ENCODE measurements at regions of chr9 and their contacts with region 1.

Region 1: DNA sequence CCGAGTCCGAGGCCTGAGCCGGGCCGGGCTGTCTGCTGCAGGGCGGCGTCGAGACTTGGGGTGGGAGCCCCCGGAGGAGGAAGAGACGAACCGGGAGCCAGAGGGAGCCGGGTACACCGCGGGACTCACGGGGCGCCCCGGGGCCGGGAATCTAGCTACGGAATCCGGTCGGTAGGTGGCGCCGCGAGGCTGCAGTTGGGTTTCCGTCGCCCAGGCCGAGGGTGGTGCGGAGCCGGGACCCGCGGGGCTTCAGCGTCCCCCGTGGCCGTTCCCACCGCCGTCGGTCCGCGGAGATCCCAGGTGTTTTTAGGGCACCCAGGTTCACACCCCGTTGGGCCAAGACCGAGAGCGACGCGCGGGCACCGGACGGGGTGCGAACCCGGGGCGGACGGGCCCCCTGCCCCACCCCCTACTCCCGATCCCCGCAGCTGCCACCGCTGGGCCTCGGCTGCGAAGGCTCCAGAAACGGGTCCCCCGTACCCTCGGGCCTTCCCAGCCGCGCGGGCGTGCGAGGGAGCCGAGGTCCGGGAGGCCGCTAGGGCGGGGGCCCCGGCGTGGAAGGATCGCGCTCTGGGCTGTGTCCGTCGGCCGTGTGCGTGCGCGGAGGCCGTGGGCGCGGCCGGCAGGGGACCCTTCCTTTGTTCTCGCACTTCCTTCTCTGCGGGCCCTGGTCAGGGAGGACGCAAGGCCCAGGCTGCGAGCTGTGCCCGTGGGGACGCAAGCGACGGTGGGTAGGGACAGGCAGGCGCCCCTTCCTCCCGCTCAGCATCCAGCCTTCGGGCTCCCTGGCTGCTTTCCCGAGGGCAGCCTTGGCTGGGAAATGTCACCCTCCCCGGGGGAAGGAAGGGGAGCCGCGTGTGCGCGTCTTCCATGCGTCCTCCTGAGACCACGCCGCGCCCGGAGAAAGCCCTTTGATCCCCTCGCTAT is 146.6 kb downstream of the GAPVD1 start:
- DNase-seq: no peak
- ATAC-seq: peak; percentile 65
- H3K4me3 ChIP-seq: peak overlapping the region; percentile 79 to 81
- H3K27ac ChIP-seq: peak overlapping the region; percentile 82
- H3K4me1 ChIP-seq: peaks cover 17 to 54% of the 10 kb centered on the region in 2 experiments
- H3K27me3 ChIP-seq: no peaks in the 10 kb centered on the region
- CTCF ChIP-seq: peak in 2 of 3 experiments; percentile 80 to 82; a peak in 4 of 6 replicates
- POLR2A ChIP-seq: peak; percentile 21
- RAD21 ChIP-seq: no peak

Region 2: GRCh38 chr9:125421591-125422181 is 13.4 kb after region 1 on chr9:
- CTCF ChIA-PET with region 1: interaction called, 3 read pairs
- POLR2A ChIA-PET with region 1: interaction called, 12 read pairs
- RAD21 ChIA-PET with region 1: no interaction called
- intact Hi-C with region 1: no loop called
- DNase-seq: no peak
- ATAC-seq: peak; percentile 19; the same call in 1 of the 2 replicates
- H3K4me3 ChIP-seq: no peak overlapping the region
- H3K27ac ChIP-seq: no peak overlapping the region
- H3K4me1 ChIP-seq: peaks cover 0 to 13% of the 10 kb centered on the region in 2 experiments; a peak in 2 of 4 replicates
- H3K27me3 ChIP-seq: no peaks in the 10 kb centered on the region
- CTCF ChIP-seq: no peak
- POLR2A ChIP-seq: no peak
- RAD21 ChIP-seq: no peak

Region 3: GRCh38 chr9:125631391-125632085 is 223.3 kb after region 1 on chr9:
- CTCF ChIA-PET with region 1: no interaction called
- POLR2A ChIA-PET with region 1: no interaction called
- RAD21 ChIA-PET with region 1: no interaction called
- intact Hi-C with region 1: loop called (anchors 1 kb)
- DNase-seq: no peak
- ATAC-seq: peak; percentile 75
- H3K4me3 ChIP-seq: no peak overlapping the region
- H3K27ac ChIP-seq: no peak overlapping the region
- H3K4me1 ChIP-seq: peaks cover 25 to 49% of the 10 kb centered on the region in 2 experiments
- H3K27me3 ChIP-seq: no peaks in the 10 kb centered on the region
- CTCF ChIP-seq: peak; percentile 50 to 70 (median 58); a peak in 5 of 6 replicates
- POLR2A ChIP-seq: no peak
- RAD21 ChIP-seq: peak; percentile 75

Region 4: DNA sequence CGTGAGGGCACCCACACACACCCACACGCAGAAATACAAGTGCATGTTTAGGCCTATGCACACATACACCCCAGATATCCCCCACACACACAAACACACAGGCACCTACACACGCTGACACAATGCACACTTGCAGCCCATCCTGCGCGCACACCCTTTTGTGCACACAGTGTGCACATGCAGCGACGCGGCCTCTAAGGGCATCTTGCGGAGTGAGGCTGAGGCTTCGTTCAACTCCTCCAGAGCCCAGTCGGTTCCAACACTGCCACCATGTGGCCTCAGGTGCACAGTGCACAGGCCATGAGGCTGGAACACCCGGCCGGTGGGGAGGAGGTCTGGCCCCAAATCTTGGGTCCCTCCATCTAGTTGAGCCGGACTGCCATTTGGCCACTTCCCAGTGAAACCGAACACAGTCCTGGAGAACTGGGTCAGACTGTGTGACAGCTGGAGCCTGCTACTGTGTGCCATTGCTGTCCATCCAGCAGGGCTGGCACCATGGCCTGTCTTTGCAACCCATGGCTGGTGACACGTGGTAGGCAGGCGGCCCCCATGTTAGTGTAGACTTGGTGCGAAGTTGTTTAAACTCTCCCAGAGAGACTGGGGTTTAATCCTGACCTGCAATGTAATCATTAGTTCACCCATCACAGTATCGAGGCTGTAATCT is 820.7 kb after region 1 on chr9:
- CTCF ChIA-PET with region 1: no interaction called
- POLR2A ChIA-PET with region 1: no interaction called
- RAD21 ChIA-PET with region 1: no interaction called
- intact Hi-C with region 1: loop called (anchors 1 kb)
- DNase-seq: peak; percentile 53
- ATAC-seq: peak; percentile 99
- H3K4me3 ChIP-seq: no peak overlapping the region
- H3K27ac ChIP-seq: no peak overlapping the region
- H3K4me1 ChIP-seq: no peaks in the 10 kb centered on the region
- H3K27me3 ChIP-seq: 0 out of 2 replicates have a peak, but pooled peaks cover 3% of the 10 kb centered on the region
- CTCF ChIP-seq: peak; percentile 88 to 96 (median 95)
- POLR2A ChIP-seq: no peak
- RAD21 ChIP-seq: peak; percentile 95

Region 5: GRCh38 chr9:126398403-126399058 is 990.3 kb after region 1 on chr9:
- CTCF ChIA-PET with region 1: interaction called, 21 read pairs
- POLR2A ChIA-PET with region 1: no interaction called
- RAD21 ChIA-PET with region 1: interaction called in 1 of 2 experiments, 3 read pairs
- intact Hi-C with region 1: loop called (anchors 2 kb)
- DNase-seq: no peak
- ATAC-seq: peak; percentile 96
- H3K4me3 ChIP-seq: no peak overlapping the region
- H3K27ac ChIP-seq: no peak overlapping the region
- H3K4me1 ChIP-seq: peaks cover 11 to 13% of the 10 kb centered on the region in 2 experiments; a peak in 3 of 4 replicates
- H3K27me3 ChIP-seq: no peaks in the 10 kb centered on the region
- CTCF ChIP-seq: peak; percentile 89 to 100 (median 98)
- POLR2A ChIP-seq: no peak
- RAD21 ChIP-seq: peak; percentile 96